ENCODE measurements at regions of chr12 and their contacts with region 1.

Region 1: DNA sequence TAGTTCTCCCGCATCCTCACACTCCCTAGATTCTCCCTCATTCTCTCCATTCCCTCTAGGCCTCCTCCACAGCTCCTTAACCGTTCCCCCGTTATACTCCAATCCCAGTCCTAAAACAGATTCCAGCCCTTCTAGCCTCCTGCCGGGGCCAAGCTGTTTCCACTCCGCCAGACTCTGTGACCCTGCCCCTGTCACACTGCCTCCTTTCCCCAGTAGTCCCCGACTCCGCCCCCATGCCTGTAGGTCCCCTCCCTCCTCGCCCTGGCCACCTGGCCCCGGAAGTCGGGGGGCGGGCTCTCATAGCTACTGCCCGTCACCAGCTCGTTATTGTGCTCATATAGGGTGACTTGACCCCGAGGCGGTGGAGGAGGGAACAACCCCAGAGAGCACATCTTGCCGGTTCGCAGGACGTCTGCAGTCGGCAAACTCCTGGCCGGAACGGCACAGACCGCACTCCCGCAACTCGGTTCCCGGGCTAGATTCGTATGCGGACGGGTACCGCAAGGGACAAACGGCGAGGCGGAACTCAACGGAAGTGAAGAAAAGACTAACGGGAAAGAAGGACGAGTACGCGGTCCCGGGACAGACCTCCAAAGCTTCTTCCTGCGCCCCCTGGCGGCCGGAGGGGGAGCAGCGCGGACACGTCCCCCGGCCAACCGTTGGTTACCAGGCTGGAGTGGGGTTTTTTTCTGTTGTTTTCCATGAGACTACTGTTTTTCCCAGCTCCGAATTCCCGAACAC is at the start of gene AAAS:
- DNase-seq: peak; percentile 98
- ATAC-seq: peak; percentile 93
- H3K4me3 ChIP-seq: peak within 1 kb of the TSS; percentile 72
- H3K27ac ChIP-seq: peak within 1 kb of the TSS; percentile 94
- H3K4me1 ChIP-seq: no peaks in the 10 kb centered on the region
- H3K27me3 ChIP-seq: no peaks in the 10 kb centered on the region
- total RNA-seq, gene AAAS: 30.5 to 48.9 (median 40.0) TPM

Region 2: DNA sequence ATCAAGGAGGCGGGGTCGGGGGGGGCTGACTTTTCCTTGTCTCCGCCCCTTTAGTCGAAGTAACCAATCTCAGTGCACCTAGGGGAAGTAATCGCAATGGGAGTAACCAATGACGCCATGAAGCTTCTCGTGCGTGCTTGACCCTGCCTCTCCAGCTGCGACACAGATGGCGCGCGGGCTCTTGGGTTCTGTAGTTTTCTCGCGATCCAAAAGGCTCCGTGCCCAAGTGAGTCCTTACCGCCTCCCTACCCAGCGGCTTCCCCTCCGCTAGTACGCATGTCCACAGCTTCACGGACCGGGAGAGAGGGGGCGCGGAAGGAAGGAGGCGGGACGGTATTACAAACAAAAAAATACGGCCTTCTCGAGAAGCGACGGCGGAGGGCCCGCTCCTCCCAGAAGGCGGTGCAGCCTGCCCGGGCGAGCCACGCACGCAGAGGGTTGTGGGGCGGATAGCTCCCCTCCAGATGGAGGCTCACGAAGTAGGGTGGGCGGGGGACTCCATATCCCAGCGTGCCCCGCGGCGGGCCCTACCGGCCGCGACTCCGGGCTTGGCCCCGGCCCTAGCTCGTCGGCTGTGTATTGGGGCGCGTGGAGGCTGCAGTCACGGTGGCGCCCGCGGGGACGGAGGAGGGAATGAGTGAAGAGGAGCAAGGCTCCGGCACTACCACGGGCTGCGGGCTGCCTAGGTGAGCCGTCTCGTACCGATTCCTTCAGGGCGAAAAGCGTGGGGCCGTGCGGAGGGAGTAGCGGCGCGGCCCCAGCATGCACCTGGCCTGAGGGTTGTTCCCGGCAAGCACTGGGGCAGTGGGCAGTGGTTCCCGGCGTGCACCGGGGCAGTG is 179.8 kb after region 1 on chr12 and contains the start of gene TARBP2:
- intact Hi-C with region 1: loop called in 3 of 4 experiments (anchors 10 kb)
- DNase-seq: peak; percentile 97 to 99 (median 98)
- ATAC-seq: peak; percentile 88 to 89
- H3K4me3 ChIP-seq: peak within 1 kb of the TSS; percentile 78
- H3K27ac ChIP-seq: peak within 1 kb of the TSS; percentile 100
- H3K4me1 ChIP-seq: peaks cover 7% of the 10 kb centered on the region
- H3K27me3 ChIP-seq: no peaks in the 10 kb centered on the region
- total RNA-seq, gene TARBP2: 12.9 to 13.9 (median 13.4) TPM